RWPE1 (cell line): ENCODE measurements at regions of chr16 and their contacts with region 1.

Region 1: GRCh38 chr16:648781-649589 is at the start of gene WDR90:
- DNase-seq: peak; percentile 91
- H3K27ac ChIP-seq: peak within 1 kb of the TSS; percentile 89
- CTCF ChIP-seq: no peak

Region 2: GRCh38 chr16:450385-451134 is 198.4 kb before region 1 on chr16:
- CTCF ChIA-PET with region 1: interaction called, 12 read pairs
- POLR2A ChIA-PET with region 1: no interaction called
- DNase-seq: no peak
- H3K27ac ChIP-seq: peak overlapping the region; percentile 9
- CTCF ChIP-seq: no peak

Region 3: DNA sequence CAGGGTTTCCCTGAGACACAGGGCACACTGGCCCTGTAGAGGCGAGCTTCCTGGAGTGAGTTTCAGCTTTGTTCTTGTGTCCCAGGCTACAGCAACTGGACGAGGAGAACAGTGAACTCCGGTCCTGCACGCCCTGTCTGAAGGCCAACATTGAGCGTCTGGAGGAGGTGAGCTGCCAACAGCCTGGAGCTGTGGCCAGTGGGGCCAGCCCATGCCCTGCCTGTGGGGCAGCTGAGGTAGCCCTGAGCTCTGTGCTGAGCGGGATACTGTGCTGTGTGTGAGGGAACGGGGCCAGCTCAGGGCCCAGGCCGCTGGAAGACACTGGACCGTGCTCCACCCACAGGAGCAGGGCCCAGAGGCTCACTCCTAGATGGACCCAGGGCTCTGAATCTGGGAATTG is 130.1 kb before region 1 on chr16:
- CTCF ChIA-PET with region 1: no interaction called
- POLR2A ChIA-PET with region 1: no interaction called
- DNase-seq: no peak
- H3K27ac ChIP-seq: peak overlapping the region; percentile 26
- CTCF ChIP-seq: no peak

Region 4: DNA sequence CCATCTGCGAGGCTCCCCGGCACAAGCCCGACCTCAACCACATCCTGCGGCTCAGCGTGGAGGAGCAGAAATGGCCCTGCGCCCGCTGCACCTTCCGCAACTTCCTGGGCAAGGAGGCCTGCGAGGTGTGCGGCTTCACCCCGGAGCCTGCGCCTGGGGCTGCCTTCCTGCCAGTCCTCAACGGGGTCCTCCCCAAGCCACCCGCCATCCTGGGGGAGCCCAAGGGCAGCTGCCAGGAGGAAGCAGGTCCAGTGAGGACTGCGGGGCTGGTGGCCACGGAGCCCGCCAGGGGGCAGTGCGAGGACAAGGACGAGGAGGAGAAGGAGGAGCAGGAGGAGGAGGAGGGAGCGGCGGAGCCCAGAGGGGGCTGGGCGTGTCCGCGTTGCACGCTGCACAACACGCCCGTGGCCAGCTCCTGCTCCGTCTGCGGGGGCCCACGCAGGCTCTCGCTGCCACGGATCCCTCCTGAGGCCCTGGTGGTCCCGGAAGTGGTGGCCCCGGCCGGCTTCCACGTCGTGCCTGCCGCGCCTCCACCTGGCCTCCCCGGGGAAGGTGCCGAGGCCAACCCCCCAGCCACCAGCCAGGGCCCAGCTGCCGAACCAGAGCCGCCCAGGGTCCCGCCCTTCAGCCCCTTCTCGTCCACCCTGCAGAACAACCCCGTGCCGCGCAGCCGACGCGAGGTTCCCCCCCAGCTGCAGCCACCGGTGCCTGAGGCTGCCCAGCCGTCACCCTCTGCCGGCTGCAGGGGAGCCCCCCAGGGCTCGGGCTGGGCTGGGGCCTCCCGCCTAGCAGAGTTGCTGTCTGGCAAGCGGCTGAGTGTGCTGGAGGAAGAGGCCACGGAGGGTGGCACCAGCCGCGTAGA is 101.8 kb before region 1 on chr16:
- CTCF ChIA-PET with region 1: no interaction called
- POLR2A ChIA-PET with region 1: no interaction called
- DNase-seq: no peak
- H3K27ac ChIP-seq: peak overlapping the region; percentile 44
- CTCF ChIP-seq: peak; percentile 63

Region 5: GRCh38 chr16:667780-668518 is 19.0 kb after region 1 on chr16 and contains the start of gene RHOT2:
- CTCF ChIA-PET with region 1: interaction called, 10 read pairs
- POLR2A ChIA-PET with region 1: no interaction called
- DNase-seq: peak; percentile 76
- H3K27ac ChIP-seq: peak within 1 kb of the TSS; percentile 94
- CTCF ChIP-seq: peak; percentile 97

Region 6: DNA sequence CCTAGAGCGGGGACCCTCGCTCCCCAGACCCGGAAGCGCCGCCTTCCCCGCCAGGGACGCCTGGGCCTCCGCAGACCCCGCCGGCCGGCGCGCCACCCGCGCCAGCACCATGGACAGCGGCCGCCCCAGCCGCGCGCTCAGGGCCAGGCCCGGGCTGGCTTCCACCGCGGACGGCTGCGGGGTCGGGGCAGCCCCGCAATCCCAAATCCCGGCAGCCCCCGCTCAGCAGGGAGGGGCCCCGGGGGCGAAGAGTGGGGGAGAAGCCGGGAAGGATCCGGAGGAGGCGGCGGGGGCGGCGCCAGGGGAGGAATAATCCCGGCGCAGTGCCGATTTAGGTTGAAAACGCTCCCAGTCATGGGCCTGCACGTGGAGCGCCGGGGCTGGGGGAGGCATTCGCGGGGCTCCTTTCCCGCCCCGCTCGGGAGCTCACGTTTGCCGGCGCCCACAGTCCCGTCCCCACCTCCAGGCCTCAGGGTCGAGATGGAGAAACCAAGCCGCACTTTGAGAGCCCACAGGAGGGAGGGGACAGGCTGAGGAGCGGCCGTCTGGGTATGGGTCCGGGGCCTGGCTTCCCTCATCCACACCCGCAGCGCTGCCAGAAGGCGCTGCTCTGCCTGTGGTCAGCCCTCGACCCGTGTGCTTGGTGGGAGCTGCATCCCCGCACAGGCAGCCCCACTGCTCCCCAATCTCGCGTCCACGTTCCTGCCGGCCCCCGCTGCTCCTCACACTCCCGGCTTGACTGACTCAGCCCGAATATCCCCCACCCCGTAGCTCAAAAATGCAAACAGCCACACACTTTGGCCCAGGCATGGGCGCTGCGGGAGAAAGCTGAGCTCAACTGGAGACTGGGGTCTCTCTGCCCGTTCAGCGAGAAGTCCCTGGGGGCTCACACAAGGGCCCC is 51.9 kb after region 1 on chr16:
- CTCF ChIA-PET with region 1: no interaction called
- POLR2A ChIA-PET with region 1: no interaction called
- DNase-seq: no peak
- H3K27ac ChIP-seq: no peak overlapping the region
- CTCF ChIP-seq: no peak